PC-9 (cell line): ENCODE measurements at regions of chr1 and their contacts with region 1.

Region 1: GRCh38 chr1:205944525-205944924 is 1.3 kb upstream of the SLC26A9 start:
- DNase-seq: no peak
- H3K4me3 ChIP-seq: no peak overlapping the region
- H3K27ac ChIP-seq: no peak overlapping the region
- H3K4me1 ChIP-seq: peaks cover 45% of the 10 kb centered on the region
- H3K27me3 ChIP-seq: peaks cover 12% of the 10 kb centered on the region; the same call in 1 of the 2 replicates
- CTCF ChIP-seq: no peak

Region 2: GRCh38 chr1:205791568-205792180 is 152.9 kb before region 1 on chr1:
- CTCF ChIA-PET with region 1: no interaction called
- POLR2A ChIA-PET with region 1: no interaction called
- intact Hi-C with region 1: no loop called
- DNase-seq: peak in 1 of 2 experiments; percentile 63
- H3K4me3 ChIP-seq: no peak overlapping the region
- H3K27ac ChIP-seq: no peak overlapping the region
- H3K4me1 ChIP-seq: no peaks in the 10 kb centered on the region
- H3K27me3 ChIP-seq: no peaks in the 10 kb centered on the region
- CTCF ChIP-seq: peak; percentile 86

Region 3: DNA sequence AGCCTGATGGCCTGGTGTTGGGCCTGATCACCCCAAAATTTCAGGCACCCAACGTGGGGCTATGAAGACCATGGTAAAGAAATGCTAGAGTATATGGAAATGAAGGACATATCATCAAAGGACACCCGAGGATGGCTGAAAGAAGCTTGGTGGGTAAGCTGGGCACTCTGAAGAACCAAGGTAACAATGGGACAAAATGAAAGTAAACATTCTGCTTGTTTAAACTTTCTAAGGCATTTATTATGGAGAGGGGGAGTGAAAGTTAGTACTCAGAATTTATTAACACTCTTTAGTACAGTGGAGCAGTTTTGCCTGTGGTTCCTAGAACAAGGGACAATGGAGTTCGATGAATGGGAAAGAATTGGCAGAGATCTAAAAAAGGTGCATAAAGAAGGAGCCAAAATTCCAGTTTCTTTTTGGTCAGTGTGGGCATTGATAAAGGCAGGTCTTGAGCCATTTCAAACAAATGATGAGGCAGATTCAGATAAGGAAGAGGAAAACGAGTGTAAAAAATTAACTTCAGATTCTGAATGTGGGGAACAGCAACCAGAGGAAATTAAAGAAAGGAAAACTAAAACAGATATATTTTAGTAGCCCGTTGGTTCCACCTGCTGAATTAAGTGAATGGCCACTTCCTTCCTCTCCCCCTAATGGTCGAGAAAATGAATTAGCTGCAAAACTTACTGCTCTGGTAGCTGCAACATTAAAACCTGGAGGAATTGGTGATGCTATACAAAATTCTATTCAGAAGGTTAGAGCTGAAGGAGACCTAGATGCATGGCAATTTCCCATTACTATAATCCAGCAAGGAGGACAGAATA is 86.2 kb before region 1 on chr1:
- CTCF ChIA-PET with region 1: no interaction called
- POLR2A ChIA-PET with region 1: no interaction called
- intact Hi-C with region 1: no loop called
- DNase-seq: no peak
- H3K4me3 ChIP-seq: no peak overlapping the region
- H3K27ac ChIP-seq: no peak overlapping the region
- H3K4me1 ChIP-seq: no peaks in the 10 kb centered on the region
- H3K27me3 ChIP-seq: no peaks in the 10 kb centered on the region
- CTCF ChIP-seq: no peak

Region 4: DNA sequence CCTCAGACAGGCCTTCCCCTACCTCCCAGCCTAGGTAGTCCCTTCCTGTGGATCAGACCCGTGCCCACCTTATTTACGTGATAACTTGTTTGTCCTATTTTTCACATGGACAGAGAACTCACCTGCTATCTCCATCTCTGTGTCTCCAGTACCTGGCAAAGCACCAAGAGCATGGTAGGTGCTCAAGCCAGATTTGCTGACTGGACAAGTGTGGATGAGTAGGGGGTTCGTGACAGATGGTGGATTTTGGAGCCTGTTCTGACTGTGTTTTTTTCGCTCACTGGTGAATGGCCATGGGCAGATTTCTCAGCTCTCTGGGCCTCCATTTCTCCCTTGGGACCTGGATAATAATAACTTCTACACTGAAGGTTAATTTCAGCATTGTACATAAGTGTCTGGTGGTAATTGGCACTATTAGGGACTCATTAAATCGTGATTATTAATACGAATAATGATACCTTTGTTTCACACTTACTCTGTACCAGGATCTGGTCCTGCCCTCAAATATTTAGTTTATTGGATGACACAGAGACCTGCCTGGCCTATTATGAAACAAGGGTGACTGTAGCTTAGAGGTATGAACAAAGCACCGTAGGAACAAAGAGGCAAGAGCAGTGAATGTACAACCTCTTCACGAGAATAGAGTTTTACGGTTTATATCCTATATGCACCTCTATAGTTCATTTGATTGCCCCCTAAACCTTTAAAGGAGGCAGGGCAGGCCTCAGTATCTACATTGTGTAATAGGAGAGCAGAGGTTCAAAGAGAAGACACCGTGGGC is 23.2 kb after region 1 on chr1:
- CTCF ChIA-PET with region 1: no interaction called
- POLR2A ChIA-PET with region 1: no interaction called
- intact Hi-C with region 1: loop called (anchors 1 kb)
- DNase-seq: peak in 1 of 2 experiments; percentile 87
- H3K4me3 ChIP-seq: no peak overlapping the region
- H3K27ac ChIP-seq: peak overlapping the region; percentile 59
- H3K4me1 ChIP-seq: peaks cover 73% of the 10 kb centered on the region
- H3K27me3 ChIP-seq: no peaks in the 10 kb centered on the region
- CTCF ChIP-seq: no peak